Spleen (tissue), 13 donors: ENCODE measurements at regions of chr18 and their contacts with region 1.

Region 1: DNA sequence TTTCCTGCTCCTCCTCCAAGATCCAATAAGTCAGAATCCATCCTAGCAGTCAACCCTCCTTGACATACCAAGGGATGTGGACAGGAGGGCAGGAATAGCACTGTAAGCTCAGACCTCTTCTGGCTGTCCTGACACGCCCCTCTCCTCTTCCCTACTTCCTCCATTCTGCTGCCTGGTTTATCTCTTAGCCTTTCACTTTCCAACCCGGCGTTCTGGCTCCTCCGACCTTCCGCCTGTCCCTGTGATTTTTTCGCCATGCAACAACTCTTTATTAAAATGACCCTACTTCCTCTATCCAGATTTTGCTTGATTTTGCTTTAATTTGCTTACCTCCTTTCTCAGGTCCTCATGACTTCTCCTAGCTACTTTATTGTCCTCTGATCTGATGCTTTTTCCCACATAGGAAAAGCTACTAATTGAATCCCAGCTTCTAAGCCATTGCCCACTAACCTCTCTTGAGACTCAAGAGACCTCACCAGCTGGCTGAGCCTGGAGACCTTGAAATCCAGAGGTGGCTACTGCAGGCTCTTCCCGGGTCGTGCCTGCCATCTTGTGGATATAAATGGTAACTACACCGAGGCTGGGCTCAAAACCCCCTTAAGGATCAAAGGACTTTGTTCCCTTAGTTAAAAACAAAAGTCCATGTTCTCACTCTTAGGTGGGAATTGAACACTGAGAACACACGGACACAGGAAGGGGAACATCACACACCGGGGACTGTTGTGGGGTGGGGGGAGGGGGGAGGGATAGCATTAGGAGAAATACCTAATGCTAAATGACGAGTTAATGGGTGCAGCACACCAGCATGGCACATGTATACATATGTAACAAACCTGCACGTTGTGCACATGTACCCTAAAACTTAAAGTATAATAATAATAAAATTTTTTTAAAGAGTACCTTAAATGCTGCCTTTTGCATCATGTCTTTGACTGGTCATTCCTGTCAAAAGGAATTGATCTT is 139.4 kb downstream of the AKAIN1 start:
- DNase-seq: no peak
- H3K4me3 ChIP-seq: peak overlapping the region in 2 of 8 donors; percentile 13 to 29
- H3K27ac ChIP-seq: peak overlapping the region in 1 of 8 donors; percentile 8
- H3K4me1 ChIP-seq: peaks cover 0 to 21% (median 12%) of the 10 kb centered on the region in 6 donors
- H3K27me3 ChIP-seq: no peaks in the 10 kb centered on the region
- CTCF ChIP-seq: peak; percentile 49 to 78 (median 71)
- POLR2A ChIP-seq: no peak

Region 2: GRCh38 chr18:4106407-4107033 is 951.1 kb before region 1 on chr18:
- intact Hi-C with region 1: loop called (anchors 10 kb)
- DNase-seq: no peak
- H3K4me3 ChIP-seq: no peak overlapping the region
- H3K27ac ChIP-seq: no peak overlapping the region
- H3K4me1 ChIP-seq: no peaks in the 10 kb centered on the region
- H3K27me3 ChIP-seq: no peaks in the 10 kb centered on the region
- CTCF ChIP-seq: peak in 10 of 11 experiments; percentile 15 to 79 (median 69)
- POLR2A ChIP-seq: no peak

Region 3: DNA sequence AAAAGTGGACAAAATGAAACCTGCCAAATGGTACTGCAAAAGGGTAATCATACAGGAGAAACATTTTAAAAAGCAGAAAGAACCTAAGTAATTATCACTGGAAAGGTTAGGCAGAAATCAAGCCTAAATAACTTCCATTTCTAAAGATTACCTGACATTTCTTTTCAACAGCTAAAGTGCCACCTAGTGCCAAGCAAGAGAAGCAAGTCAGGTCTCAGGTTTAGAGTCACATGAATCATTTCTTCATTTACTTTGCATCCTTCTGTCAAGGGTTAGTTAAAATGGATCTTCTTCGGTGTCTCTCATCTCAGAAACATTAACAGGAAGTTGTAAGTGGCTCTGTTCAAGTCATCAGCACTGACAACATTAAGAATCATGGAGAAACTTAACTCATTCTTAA is 49.1 kb after region 1 on chr18:
- intact Hi-C with region 1: no loop called
- DNase-seq: no peak
- H3K4me3 ChIP-seq: no peak overlapping the region
- H3K27ac ChIP-seq: no peak overlapping the region
- H3K4me1 ChIP-seq: no peaks in the 10 kb centered on the region
- H3K27me3 ChIP-seq: no peaks in the 10 kb centered on the region
- CTCF ChIP-seq: no peak
- POLR2A ChIP-seq: no peak